SK-N-SH (cell line): ENCODE measurements at regions of chr19 and their contacts with region 1.

Region 1: DNA sequence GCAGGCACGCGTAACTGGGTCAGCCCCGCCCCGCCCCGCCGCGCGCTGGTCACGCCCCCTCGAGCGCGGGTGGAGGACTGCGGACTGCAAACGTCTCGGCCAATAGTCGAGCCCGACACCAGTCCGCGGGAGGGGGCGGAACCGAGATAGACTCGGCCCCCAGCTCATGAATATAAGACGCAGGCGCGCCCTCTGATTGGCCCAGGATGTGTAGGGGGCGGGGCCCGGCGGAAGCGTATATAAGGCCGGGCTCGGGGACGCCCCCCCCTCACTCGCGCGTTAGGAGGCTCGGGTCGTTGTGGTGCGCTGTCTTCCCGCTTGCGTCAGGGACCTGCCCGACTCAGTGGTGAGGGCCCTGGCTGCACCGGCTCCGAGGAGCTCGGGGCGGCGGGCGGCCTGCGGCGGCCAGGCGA is at the start of gene CIRBP:
- DNase-seq: peak; percentile 97
- H3K4me3 ChIP-seq: peak within 1 kb of the TSS; percentile 78 to 86
- H3K27ac ChIP-seq: peak within 1 kb of the TSS; percentile 91 to 98
- H3K4me1 ChIP-seq: peaks cover 47 to 62% of the 10 kb centered on the region in 2 experiments; a peak in 3 of 4 replicates
- H3K27me3 ChIP-seq: no peaks in the 10 kb centered on the region
- CTCF ChIP-seq: no peak
- EP300 ChIP-seq: no peak
- RAD21 ChIP-seq: no peak
- polyA plus RNA-seq, gene CIRBP: 762 and 857 TPM in 2 replicates

Region 2: DNA sequence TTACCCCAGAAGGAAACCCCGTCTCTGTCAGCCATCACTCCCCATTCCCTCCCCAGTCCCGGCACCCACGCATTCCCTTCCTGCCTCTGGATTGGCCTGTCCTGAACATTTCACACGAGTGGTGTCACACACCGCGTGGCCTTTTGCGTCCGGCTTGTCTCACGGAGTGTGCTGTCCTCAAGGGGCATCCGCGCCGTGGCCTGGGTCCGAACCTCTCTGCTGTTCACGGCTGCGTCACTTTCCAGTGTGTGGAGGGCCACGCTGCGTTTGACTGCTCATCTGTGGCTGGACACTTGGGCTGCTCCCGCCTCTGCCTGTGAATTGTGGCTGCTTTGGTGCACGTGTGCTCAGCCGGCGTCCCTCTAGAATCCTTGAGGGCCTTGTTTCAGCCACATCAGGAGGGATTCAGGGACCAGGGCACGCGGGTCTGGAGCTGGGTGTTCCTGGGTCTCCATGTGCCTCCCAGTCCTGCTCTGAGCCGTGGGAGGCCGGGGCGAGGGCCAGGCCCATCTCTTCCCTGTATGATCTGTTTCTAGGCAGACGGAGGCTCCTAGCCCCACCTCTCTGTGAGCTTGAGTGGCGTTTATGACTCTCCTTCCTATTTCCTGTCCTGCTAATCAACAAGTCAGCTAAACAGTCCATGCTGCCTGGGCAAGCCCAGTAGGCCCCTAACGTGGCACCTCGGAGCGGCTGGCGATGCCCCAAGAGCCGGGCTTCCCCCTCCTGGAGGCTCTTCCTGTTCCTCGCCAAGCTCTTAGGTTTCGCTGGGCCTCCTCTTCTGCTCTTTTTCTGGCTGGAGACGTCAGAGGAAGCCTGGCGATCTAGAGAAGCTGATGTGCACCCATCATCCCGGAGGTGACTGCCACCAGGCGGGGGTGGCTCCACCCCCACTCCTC is 55.4 kb before region 1 on chr19:
- CTCF ChIA-PET with region 1: interaction called, 19 read pairs
- POLR2A ChIA-PET with region 1: interaction called, 10 read pairs
- DNase-seq: peak; percentile 57
- H3K4me3 ChIP-seq: 0 out of 4 replicates have a peak overlapping the region, but pooled peaks of 1 of the 2 experiments have one; percentile 13
- H3K27ac ChIP-seq: peak overlapping the region; percentile 90 to 92
- H3K4me1 ChIP-seq: peaks cover 35 to 39% of the 10 kb centered on the region in 2 experiments; a peak in 3 of 4 replicates
- H3K27me3 ChIP-seq: no peaks in the 10 kb centered on the region
- CTCF ChIP-seq: no peak
- EP300 ChIP-seq: no peak
- RAD21 ChIP-seq: no peak

Region 3: GRCh38 chr19:1241417-1242095 is 27.5 kb before region 1 on chr19 and contains the start of gene ATP5F1D:
- CTCF ChIA-PET with region 1: interaction called, 594 read pairs
- POLR2A ChIA-PET with region 1: interaction called, 110 read pairs
- DNase-seq: peak; percentile 93
- H3K4me3 ChIP-seq: peak within 1 kb of the TSS; percentile 85 to 91
- H3K27ac ChIP-seq: peak within 1 kb of the TSS; percentile 55 to 83
- H3K4me1 ChIP-seq: peaks cover 22 to 51% of the 10 kb centered on the region in 2 experiments; a peak in 3 of 4 replicates
- H3K27me3 ChIP-seq: no peaks in the 10 kb centered on the region
- CTCF ChIP-seq: no peak
- EP300 ChIP-seq: no peak
- RAD21 ChIP-seq: no peak
- polyA plus RNA-seq, gene ATP5F1D: 133 and 226 TPM in 2 replicates

Region 4: GRCh38 chr19:1255547-1256227 is 13.4 kb before region 1 on chr19:
- CTCF ChIA-PET with region 1: interaction called, 99 read pairs
- POLR2A ChIA-PET with region 1: interaction called, 34 read pairs
- DNase-seq: no peak
- H3K4me3 ChIP-seq: no peak overlapping the region
- H3K27ac ChIP-seq: peak overlapping the region; percentile 26 to 99; a peak in 3 of 4 replicates
- H3K4me1 ChIP-seq: peaks cover 40 to 52% of the 10 kb centered on the region in 2 experiments
- H3K27me3 ChIP-seq: no peaks in the 10 kb centered on the region
- CTCF ChIP-seq: no peak
- EP300 ChIP-seq: no peak
- RAD21 ChIP-seq: no peak

Region 5: GRCh38 chr19:1445185-1445931 is 176.3 kb after region 1 on chr19:
- CTCF ChIA-PET with region 1: interaction called, 5 read pairs
- POLR2A ChIA-PET with region 1: interaction called, 10 read pairs
- DNase-seq: peak; percentile 94
- H3K4me3 ChIP-seq: peak overlapping the region; percentile 64 to 68
- H3K27ac ChIP-seq: peak overlapping the region in 1 of 2 experiments; percentile 60; a peak in 1 of 4 replicates
- H3K4me1 ChIP-seq: peaks cover 3 to 32% of the 10 kb centered on the region in 2 experiments; a peak in 3 of 4 replicates
- H3K27me3 ChIP-seq: no peaks in the 10 kb centered on the region
- CTCF ChIP-seq: peak; percentile 83
- EP300 ChIP-seq: 0 out of 4 replicates have a peak, but pooled peaks of 1 of the 2 experiments have one; percentile 7
- RAD21 ChIP-seq: peak; percentile 56